ENCODE measurements at regions of chr6 and their contacts with region 1.

Region 1: GRCh38 chr6:132530293-132530974 is 7.6 kb upstream of the TAAR9 start:
- DNase-seq: peak; percentile 57 to 72
- H3K4me3 ChIP-seq: peak overlapping the region; percentile 9; the same call in 1 of the 2 replicates
- H3K4me3 Mint-ChIP-seq: no peak overlapping the region
- H3K27ac Mint-ChIP-seq: no peak overlapping the region
- H3K4me1 ChIP-seq: no peaks in the 10 kb centered on the region
- H3K4me1 Mint-ChIP-seq: no peaks in the 10 kb centered on the region
- H3K27me3 ChIP-seq: no peaks in the 10 kb centered on the region
- H3K27me3 Mint-ChIP-seq: no peaks in the 10 kb centered on the region
- CTCF ChIP-seq: peak; percentile 70 to 73

Region 2: DNA sequence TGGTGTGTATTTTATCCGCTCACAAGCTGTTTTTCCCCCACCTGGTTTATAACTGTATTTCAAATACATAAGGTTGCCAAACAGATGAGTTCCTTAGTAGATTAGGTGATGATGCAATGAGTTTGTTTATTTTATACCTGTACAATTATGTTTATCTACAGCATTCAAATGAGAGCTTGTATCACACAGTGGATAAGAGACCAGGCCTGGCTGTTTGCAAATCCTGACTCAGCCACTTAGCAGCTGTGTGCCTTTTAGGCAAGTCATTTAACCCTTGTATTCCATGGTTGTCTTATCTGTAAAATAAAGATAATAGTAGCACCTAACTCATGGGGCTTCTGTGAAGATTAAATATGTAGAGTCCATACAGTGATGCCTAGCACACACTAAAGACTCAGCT is 272.9 kb before region 1 on chr6:
- CTCF ChIA-PET with region 1: no interaction called
- POLR2A ChIA-PET with region 1: no interaction called
- intact Hi-C with region 1: no loop called
- DNase-seq: no peak
- H3K4me3 ChIP-seq: no peak overlapping the region
- H3K4me3 Mint-ChIP-seq: no peak overlapping the region
- H3K27ac Mint-ChIP-seq: no peak overlapping the region
- H3K4me1 ChIP-seq: no peaks in the 10 kb centered on the region
- H3K4me1 Mint-ChIP-seq: no peaks in the 10 kb centered on the region
- H3K27me3 ChIP-seq: no peaks in the 10 kb centered on the region
- H3K27me3 Mint-ChIP-seq: peaks cover 10% of the 10 kb centered on the region
- CTCF ChIP-seq: no peak

Region 3: DNA sequence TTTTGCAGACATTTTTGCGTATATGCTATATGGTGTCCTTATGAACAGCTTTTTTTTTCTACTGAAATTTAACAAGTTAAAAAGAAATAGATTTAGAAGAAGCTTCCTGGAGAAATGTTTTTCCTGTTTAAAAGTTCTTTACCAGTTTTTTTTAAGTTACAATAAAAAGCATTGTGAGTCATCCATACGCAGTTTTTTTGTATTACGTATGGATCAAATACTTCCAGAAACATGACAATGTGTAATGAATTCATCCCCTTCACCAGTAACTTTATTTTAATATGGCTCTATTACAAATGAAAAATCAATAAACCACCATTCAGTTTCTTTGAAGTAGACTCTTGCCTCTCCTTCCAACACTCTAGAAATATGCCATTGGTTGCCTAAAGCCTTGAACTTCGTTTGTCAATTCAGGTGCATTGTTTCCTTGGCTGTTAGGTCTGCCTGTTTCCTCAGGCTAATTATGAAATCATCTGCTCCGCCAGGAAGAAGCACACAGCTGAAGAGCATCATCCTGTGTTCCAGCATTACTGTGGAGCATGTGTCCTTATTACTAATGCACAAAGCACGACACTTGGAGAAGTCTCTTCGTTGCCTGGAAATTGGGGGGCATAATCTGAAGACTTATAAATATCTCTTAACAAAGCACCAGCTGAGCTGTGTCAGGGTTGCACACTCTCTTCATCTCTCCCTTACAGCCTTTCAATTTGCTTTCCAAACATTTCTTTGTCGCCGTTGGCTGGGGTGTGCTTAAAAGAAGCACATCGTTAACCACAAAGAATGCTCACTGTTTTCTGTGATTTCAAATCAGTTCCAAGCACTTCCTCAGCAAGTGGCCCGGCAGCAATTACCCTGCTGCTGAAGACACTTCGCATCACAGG is 138.8 kb before region 1 on chr6:
- CTCF ChIA-PET with region 1: no interaction called
- POLR2A ChIA-PET with region 1: no interaction called
- intact Hi-C with region 1: no loop called
- DNase-seq: no peak
- H3K4me3 ChIP-seq: no peak overlapping the region
- H3K4me3 Mint-ChIP-seq: no peak overlapping the region
- H3K27ac Mint-ChIP-seq: no peak overlapping the region
- H3K4me1 ChIP-seq: no peaks in the 10 kb centered on the region
- H3K4me1 Mint-ChIP-seq: no peaks in the 10 kb centered on the region
- H3K27me3 ChIP-seq: no peaks in the 10 kb centered on the region
- H3K27me3 Mint-ChIP-seq: peaks cover 21% of the 10 kb centered on the region
- CTCF ChIP-seq: no peak

Region 4: DNA sequence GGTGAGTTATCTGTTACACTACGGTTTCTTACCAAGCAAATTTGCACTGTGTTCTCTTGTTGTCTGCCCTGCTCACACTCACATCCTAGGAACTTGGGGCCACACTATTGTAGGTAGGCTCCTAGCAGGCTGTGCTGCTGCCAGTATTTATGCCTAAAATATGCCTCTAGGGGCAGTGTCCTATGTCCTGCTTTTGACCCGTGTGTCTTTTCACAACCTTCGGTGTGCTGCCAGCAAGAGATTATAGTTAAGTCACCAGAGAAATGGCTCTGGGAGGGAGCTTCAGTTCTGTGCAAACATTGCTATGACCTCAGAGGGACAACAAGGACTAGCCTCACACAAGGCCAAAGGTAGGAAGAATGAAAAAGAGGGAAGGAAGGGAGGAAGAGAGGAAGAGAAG is 68.0 kb after region 1 on chr6:
- CTCF ChIA-PET with region 1: no interaction called
- POLR2A ChIA-PET with region 1: no interaction called
- intact Hi-C with region 1: loop called (anchors 10 kb)
- DNase-seq: peak; percentile 56 to 59
- H3K4me3 ChIP-seq: no peak overlapping the region
- H3K4me3 Mint-ChIP-seq: no peak overlapping the region
- H3K27ac Mint-ChIP-seq: no peak overlapping the region
- H3K4me1 ChIP-seq: peaks cover 6% of the 10 kb centered on the region; the same call in 1 of the 2 replicates
- H3K4me1 Mint-ChIP-seq: peaks cover 7% of the 10 kb centered on the region
- H3K27me3 ChIP-seq: no peaks in the 10 kb centered on the region
- H3K27me3 Mint-ChIP-seq: no peaks in the 10 kb centered on the region
- CTCF ChIP-seq: peak; percentile 35 to 38

Region 5: DNA sequence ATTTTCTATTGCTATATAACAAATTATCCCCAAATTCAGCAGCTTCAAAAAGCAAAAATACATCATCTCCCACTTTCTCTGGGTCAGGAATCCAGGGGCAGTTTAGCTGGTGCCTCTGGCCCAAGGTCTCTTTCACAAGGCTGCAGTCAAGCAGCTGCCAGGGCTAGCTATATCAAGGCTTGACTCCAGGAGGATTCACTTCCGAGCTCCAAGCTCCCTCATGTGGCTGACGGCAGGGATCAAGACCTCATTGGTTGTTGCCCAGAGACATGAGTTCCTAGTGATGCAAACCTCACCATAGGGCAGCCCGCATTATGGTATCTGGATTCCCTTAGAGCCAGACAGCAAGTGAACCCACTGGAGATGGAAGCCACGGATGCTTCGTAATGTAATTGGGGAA is 184.8 kb after region 1 on chr6:
- CTCF ChIA-PET with region 1: interaction called, 23 read pairs
- POLR2A ChIA-PET with region 1: no interaction called
- intact Hi-C with region 1: loop called (anchors 1 kb)
- DNase-seq: peak; percentile 73 to 81
- H3K4me3 ChIP-seq: no peak overlapping the region
- H3K4me3 Mint-ChIP-seq: no peak overlapping the region
- H3K27ac Mint-ChIP-seq: no peak overlapping the region
- H3K4me1 ChIP-seq: peaks cover 9% of the 10 kb centered on the region
- H3K4me1 Mint-ChIP-seq: no peaks in the 10 kb centered on the region
- H3K27me3 ChIP-seq: no peaks in the 10 kb centered on the region
- H3K27me3 Mint-ChIP-seq: no peaks in the 10 kb centered on the region
- CTCF ChIP-seq: peak; percentile 53 to 70

Region 6: DNA sequence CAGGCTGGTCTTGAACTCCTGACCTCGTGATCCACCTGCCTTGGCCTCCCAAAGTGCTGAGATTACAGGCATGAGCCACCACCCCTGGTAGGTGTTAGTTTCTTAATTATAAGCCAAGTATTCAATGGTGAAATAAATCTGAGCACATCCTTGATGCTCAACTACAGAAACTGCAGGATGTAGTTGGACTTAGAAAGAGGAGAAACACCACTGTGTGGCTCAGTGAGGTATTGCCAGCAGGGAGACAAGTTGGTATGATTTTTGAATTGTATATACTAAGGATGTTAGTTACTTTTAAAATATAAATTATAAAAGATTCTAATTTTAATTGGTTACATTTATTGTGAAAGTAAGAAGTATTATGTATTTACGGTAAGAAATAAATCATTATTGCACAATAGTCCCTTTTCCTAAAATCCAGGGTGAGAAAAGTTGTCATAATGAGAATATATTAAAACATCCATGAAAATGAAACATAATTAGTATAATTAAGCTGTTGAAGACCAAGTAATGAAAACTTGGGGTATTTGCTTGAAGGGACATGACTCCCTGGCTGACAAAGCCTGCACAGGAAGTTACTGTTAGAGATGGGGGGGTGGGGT is 250.4 kb after region 1 on chr6:
- CTCF ChIA-PET with region 1: no interaction called
- POLR2A ChIA-PET with region 1: no interaction called
- intact Hi-C with region 1: loop called (anchors 5 kb)
- DNase-seq: no peak
- H3K4me3 ChIP-seq: no peak overlapping the region
- H3K4me3 Mint-ChIP-seq: no peak overlapping the region
- H3K27ac Mint-ChIP-seq: no peak overlapping the region
- H3K4me1 ChIP-seq: no peaks in the 10 kb centered on the region
- H3K4me1 Mint-ChIP-seq: no peaks in the 10 kb centered on the region
- H3K27me3 ChIP-seq: no peaks in the 10 kb centered on the region
- H3K27me3 Mint-ChIP-seq: no peaks in the 10 kb centered on the region
- CTCF ChIP-seq: peak; percentile 20 to 37

Region 7: DNA sequence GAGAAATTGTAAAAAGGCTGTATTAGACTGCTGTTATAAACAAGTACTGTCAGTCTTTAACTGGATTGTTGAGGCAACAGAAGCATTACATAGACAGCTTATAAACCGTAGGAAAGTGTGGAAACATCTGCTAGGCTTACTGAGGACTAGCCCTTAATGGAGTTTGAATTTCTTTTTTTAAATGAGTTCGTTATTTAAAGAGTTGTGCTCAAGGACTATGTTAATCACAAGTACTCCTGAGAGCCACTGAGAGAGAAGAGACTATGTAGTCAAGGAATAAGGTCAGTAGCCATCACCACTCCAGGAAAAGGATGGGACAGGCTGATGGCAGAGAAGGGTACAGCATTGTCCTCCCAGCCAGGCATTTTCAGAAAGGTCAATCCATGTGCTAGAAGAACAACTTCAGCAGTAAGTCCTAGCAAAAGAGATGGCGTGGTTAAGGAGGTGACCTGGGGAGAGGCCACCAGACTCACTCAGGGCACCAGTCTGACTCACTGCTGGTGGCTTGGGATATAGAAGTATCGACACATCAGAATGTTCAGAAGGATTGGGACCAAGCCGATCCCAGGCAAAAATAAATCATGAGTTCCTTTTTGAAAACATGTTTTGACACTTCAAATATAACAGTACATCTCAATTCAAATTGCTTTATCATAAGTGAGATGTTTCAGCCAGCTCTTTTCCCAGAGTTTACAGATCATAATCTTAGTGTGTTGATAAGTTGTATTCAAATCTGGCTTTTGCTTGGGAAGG is 290.4 kb after region 1 on chr6:
- CTCF ChIA-PET with region 1: no interaction called
- POLR2A ChIA-PET with region 1: no interaction called
- intact Hi-C with region 1: loop called (anchors 5 kb)
- DNase-seq: peak in 1 of 2 experiments; percentile 38
- H3K4me3 ChIP-seq: no peak overlapping the region
- H3K4me3 Mint-ChIP-seq: peak overlapping the region; percentile 20
- H3K27ac Mint-ChIP-seq: peak overlapping the region; percentile 71
- H3K4me1 ChIP-seq: no peaks in the 10 kb centered on the region; the same call in none of the 2 replicates
- H3K4me1 Mint-ChIP-seq: peaks cover 17% of the 10 kb centered on the region
- H3K27me3 ChIP-seq: no peaks in the 10 kb centered on the region
- H3K27me3 Mint-ChIP-seq: no peaks in the 10 kb centered on the region
- CTCF ChIP-seq: no peak